ENCODE measurements at regions of chr10 and their contacts with region 1.

Region 1: GRCh38 chr10:73495884-73496674 is at the start of gene PPP3CB:
- DNase-seq: peak; percentile 93
- H3K4me3 Mint-ChIP-seq: peak within 1 kb of the TSS; percentile 99
- H3K27ac Mint-ChIP-seq: peak within 1 kb of the TSS; percentile 99
- H3K4me1 Mint-ChIP-seq: peaks cover 38% of the 10 kb centered on the region
- H3K27me3 Mint-ChIP-seq: no peaks in the 10 kb centered on the region
- total RNA-seq, gene PPP3CB: 42.5 and 43.6 TPM in 2 replicates

Region 2: DNA sequence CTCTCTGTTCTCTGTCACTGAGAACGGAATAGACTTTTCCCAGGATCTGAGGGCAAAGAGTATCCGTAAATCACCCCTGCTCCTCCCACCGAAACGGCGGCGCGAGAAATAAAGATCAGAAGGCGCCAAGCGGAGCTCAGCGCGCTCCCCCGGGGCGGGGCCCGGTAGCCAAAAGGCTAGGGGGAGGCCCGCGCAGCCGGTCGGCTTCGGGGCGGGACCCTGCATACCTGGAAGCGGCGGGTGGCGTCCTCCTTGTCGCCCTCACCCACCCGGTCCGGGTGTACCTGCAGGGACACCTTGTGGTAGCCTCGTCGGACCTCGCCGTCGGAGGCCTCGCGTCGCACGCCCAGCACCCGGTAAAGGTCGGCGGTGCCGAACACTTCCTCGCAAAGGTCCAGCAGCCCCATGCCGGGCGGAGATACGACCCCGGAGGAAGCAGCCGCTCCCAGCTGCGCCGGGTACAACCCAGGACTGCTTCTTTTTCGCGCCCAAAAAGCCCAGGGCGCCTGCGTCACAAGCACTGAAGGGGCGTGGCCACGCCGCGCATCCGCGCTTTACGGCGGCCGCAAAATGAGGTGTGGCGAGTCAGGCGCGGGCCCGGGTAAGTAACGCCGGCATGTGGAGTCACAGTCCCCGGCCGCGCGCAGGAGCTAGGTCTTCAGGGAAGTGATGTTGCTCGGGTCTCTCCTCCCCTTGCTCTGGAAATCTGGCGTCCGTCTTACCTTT is 249.1 kb before region 1 on chr10 and contains the start of gene DNAJC9:
- intact Hi-C with region 1: loop called (anchors 1 kb)
- DNase-seq: peak; percentile 99
- H3K4me3 Mint-ChIP-seq: peak within 1 kb of the TSS; percentile 98
- H3K27ac Mint-ChIP-seq: peak within 1 kb of the TSS; percentile 97
- H3K4me1 Mint-ChIP-seq: peaks cover 55% of the 10 kb centered on the region
- H3K27me3 Mint-ChIP-seq: no peaks in the 10 kb centered on the region
- total RNA-seq, gene DNAJC9: 54.2 and 56.6 TPM in 2 replicates

Region 3: DNA sequence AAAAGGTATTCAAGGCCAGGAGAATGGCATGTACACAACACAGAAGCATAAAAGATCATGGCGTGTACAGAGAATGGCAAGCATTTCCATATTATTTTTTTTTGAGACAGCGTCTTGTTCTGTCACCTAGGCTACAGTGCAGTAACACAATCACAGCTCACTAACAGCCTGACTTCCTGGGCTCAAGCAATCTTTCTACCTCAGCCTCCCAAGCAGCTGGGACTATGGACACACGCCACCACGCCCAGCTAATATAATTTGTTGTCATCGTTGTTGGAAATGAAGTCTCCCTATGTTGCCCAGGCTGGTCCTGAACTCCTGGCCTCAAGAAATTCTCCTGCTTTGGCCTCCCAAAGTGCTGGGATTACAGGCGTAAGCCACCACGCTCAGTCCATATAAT is 109.5 kb before region 1 on chr10:
- intact Hi-C with region 1: no loop called
- DNase-seq: no peak
- H3K4me3 Mint-ChIP-seq: no peak overlapping the region
- H3K27ac Mint-ChIP-seq: no peak overlapping the region
- H3K4me1 Mint-ChIP-seq: peaks cover 2% of the 10 kb centered on the region
- H3K27me3 Mint-ChIP-seq: no peaks in the 10 kb centered on the region

Region 4: GRCh38 chr10:73413528-73414229 is 82.4 kb before region 1 on chr10 and contains the start of gene ANXA7:
- intact Hi-C with region 1: loop called (anchors 1 kb)
- DNase-seq: peak; percentile 97
- H3K4me3 Mint-ChIP-seq: peak within 1 kb of the TSS; percentile 92
- H3K27ac Mint-ChIP-seq: peak within 1 kb of the TSS; percentile 90
- H3K4me1 Mint-ChIP-seq: peaks cover 33% of the 10 kb centered on the region
- H3K27me3 Mint-ChIP-seq: no peaks in the 10 kb centered on the region
- total RNA-seq, gene ANXA7: 169 and 171 TPM in 2 replicates

Region 5: DNA sequence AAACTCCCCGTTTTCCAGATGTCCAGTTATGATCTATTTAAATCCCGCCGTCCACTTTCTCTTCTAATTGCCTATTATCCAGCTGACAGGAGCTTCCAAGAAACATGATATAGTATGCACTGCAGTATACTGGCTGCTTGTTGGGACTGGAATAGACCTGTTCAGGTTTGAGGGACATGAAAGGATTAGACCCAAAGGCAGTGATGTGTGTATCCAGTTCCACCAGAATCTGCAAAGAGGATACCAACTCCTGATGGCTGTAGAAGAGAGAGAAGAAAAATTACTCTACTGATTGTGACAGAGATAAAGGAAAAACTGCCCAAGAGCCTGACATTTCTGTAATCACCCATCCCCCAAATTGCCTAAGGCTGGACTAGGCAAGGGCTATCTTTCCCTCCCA is 71.6 kb before region 1 on chr10:
- intact Hi-C with region 1: no loop called
- DNase-seq: no peak
- H3K4me3 Mint-ChIP-seq: no peak overlapping the region
- H3K27ac Mint-ChIP-seq: no peak overlapping the region
- H3K4me1 Mint-ChIP-seq: no peaks in the 10 kb centered on the region
- H3K27me3 Mint-ChIP-seq: no peaks in the 10 kb centered on the region

Region 6: DNA sequence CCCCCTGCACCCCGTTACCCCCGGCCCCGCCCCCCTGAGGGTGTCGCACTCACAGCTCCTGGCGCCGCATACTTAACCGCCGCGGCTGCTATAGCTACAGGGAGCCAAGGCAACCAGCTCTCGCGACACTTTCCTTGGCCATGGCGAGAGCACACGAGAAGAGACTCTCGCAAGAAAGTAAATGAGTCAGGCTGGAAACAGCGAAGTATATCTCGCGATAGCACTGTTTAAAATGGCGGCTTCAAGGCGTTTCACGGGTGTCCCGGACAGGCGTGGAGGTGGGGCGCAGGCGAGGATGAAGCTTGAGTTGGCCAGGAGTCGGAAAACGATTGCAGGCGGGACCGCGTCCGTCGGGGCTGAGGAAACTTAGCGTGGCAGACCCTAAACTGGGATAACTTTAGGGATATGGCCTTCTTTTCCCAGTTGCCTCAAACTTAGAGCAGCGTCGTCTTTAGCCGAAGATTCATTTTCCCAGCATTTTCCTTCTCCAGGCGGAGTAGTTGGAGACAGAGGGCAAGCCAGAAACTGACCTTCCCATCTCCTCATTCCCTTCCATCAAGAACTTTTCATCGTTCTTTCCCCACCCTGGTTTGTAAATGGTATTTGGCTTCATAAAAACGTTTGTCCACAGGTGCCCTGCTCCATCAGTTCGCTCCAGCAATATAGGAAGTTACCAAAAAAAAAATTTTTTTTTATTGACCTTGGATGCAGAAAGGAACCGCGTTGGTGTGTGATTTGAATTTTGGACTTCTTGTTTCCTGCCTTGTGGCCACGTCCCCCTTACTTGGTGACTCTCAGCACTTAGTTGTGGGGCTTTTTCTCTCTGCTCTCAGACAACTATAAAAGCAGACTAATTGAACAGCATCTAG is 130.0 kb after region 1 on chr10:
- intact Hi-C with region 1: loop called (anchors 1 kb)
- DNase-seq: peak; percentile 98
- H3K4me3 Mint-ChIP-seq: peak overlapping the region; percentile 96
- H3K27ac Mint-ChIP-seq: peak overlapping the region; percentile 96
- H3K4me1 Mint-ChIP-seq: peaks cover 16% of the 10 kb centered on the region
- H3K27me3 Mint-ChIP-seq: no peaks in the 10 kb centered on the region

Region 7: GRCh38 chr10:73785221-73785720 is 289.2 kb after region 1 on chr10 and contains the start of gene ZSWIM8:
- intact Hi-C with region 1: loop called (anchors 1 kb)
- DNase-seq: peak; percentile 94
- H3K4me3 Mint-ChIP-seq: peak within 1 kb of the TSS; percentile 91
- H3K27ac Mint-ChIP-seq: peak within 1 kb of the TSS; percentile 98
- H3K4me1 Mint-ChIP-seq: peaks cover 39% of the 10 kb centered on the region
- H3K27me3 Mint-ChIP-seq: no peaks in the 10 kb centered on the region
- total RNA-seq, gene ZSWIM8: 50.8 and 53.5 TPM in 2 replicates

Measured in activated CD4-positive, alpha-beta T cell treated with anti-CD3 and anti-CD28 coated beads, Interleukin-2, amount 10 ng/mL, durations not matched to agents 24 days and 14 days (primary cell).